BJ (cell line): ENCODE measurements at regions of chr14 and their contacts with region 1.

Region 1: DNA sequence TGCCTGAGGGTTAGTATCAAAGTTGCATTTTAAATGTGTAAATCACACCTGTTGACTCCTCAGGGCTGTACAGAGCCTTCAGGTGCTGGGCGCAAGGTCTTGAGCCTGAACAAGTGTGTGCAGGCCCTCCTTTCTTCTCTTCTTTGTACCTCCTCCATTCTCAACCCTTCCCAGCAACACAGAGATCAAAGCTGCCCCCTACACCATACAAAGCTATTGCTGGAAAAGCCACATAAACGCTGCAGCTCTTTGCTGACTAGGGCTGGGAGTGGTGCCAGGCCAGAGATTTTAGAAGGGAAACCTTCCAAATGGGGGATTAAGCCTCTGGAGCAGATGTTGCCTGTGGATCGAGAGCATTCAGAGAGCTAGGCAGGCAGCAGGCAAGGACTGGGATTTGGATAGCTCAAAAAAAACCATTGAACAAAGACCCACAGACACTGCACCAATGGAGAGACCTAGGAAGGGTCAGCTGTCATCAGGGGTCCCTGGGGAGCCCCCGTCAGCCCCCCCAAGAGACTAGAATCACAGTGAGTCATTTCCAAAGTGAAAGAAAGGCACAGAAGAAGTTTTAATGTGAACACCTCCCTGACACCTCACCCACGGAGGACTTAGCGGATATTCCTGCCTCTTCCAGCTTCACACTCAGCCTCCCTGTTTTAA is 18.2 kb upstream of the SUSD6 start:
- DNase-seq: no peak
- H3K4me3 ChIP-seq: no peak overlapping the region
- H3K27me3 ChIP-seq: no peaks in the 10 kb centered on the region
- CTCF ChIP-seq: no peak

Region 2: DNA sequence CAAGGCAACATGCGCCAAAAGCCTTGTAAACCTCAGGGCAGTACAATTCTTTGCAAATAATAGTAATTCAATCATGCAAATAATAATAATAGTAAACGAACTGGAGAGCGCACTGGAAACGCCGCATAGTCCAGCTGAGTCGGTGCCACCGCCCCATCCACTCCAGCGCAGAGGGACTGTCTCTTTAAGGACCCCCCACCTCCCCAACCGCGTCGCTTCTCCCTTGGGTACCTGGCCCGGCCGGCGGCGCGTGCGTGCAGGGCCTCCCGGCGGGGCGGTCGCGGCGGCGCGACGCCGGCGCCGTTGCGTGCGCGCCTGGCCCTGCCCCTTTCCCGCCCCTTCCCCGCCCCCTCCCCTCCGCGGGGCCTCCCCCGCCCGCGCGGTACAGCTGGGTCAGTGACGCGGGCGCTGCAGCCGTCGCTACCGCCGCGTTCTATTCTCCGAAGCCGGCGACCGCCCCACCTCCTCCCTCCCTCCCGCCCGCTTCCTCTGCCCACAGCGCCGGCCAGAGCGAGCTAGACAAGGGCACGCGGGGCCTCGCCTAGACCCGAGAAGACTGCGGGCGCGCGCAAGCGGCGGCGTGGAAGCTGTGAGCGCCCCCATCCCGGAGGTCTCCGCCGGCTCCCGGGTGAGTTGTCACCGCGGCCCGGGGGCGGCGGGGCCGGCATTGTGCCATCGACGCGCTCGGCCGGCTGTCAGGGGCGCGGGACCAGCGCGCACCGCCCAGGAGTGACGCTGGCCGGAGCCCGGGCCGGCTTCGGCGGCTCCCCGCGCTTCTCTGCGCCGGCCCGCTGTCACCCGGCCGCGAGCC is 18.3 kb after region 1 on chr14 and contains the start of gene SUSD6:
- CTCF ChIA-PET with region 1: interaction called, 25 read pairs
- POLR2A ChIA-PET with region 1: no interaction called
- DNase-seq: no peak
- H3K4me3 ChIP-seq: peak within 1 kb of the TSS; percentile 75
- H3K27me3 ChIP-seq: no peaks in the 10 kb centered on the region
- CTCF ChIP-seq: no peak
- polyA plus RNA-seq, gene SUSD6: 15.9 and 20.3 TPM in 2 replicates